ENCODE measurements at regions of chr14 and their contacts with region 1.

Region 1: DNA sequence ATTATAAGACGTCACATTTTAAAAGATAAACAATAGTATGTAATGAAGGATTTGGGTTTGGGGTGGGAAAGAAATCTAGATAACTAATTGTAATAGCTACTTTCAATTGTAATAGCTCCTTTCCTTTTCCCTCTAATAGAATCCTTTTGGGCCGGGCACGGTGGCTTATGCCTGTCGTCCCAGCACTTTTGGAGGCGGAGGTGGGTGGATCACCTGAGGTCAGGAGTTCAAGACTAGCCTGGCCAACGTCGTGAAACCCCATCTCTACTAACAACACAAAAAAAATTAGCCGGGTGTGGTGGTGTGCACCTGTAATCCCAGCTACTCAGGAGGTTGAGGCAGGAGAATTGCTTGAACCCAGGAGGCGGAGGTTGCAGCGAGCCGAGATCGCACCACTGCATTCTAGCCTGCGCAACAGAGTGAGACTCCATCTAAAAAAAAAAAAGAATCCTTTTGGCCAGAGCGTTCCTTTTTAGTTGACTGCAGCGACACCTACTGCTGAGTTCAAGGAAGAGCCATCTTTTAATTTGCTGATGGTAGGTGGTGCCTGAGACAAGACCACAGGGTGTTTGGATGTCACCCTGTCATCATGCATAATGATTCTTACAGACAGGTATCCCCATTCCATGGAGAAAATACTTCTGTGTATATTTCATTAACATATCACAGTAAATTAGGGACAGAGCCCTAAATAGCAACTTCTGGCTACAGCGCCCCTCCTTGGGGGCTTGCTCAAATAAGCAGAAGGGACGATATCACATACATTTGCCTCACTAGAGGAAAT is 79.5 kb downstream of the ARMH4 start:
- DNase-seq: peak in 1 of 2 experiments; percentile 37
- H3K4me3 ChIP-seq: no peak overlapping the region
- H3K27ac ChIP-seq: no peak overlapping the region
- H3K4me1 ChIP-seq: no peaks in the 10 kb centered on the region
- H3K27me3 ChIP-seq: peaks cover 12% of the 10 kb centered on the region; the same call in 1 of the 2 replicates
- CTCF ChIP-seq: peak; percentile 82

Region 2: GRCh38 chr14:56491299-56492285 is 1580.9 kb before region 1 on chr14:
- CTCF ChIA-PET with region 1: no interaction called
- POLR2A ChIA-PET with region 1: no interaction called
- intact Hi-C with region 1: loop called (anchors 10 kb)
- DNase-seq: peak; percentile 27 to 38
- H3K4me3 ChIP-seq: no peak overlapping the region; the same call in 1 of the 2 replicates
- H3K27ac ChIP-seq: no peak overlapping the region
- H3K4me1 ChIP-seq: no peaks in the 10 kb centered on the region
- H3K27me3 ChIP-seq: no peaks in the 10 kb centered on the region
- CTCF ChIP-seq: peak; percentile 78

Region 3: GRCh38 chr14:57486767-57487379 is 585.6 kb before region 1 on chr14:
- CTCF ChIA-PET with region 1: interaction called, 3 read pairs
- POLR2A ChIA-PET with region 1: no interaction called
- intact Hi-C with region 1: loop called (anchors 2 kb)
- DNase-seq: no peak
- H3K4me3 ChIP-seq: no peak overlapping the region
- H3K27ac ChIP-seq: no peak overlapping the region
- H3K4me1 ChIP-seq: no peaks in the 10 kb centered on the region
- H3K27me3 ChIP-seq: peaks cover 26% of the 10 kb centered on the region
- CTCF ChIP-seq: peak; percentile 70

Region 4: DNA sequence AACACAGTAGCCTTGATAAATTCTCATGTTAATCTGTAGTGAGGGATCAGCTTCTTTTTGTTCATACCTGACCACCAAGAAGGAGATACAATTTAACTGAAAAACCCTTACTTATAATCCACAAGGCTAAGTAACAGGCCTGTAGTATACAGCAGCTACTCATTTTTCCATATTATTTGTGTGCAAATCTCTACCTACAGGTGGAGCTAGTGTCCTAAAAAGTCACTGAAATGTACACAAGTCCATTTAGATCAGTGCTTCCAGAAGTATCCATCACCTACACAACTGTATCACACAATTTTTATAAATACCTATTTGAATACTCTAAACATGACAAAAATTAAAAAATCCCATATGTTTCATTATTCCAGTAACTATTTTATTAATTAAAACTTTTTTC is 379.8 kb before region 1 on chr14:
- CTCF ChIA-PET with region 1: no interaction called
- POLR2A ChIA-PET with region 1: no interaction called
- intact Hi-C with region 1: loop called (anchors 10 kb)
- DNase-seq: no peak
- H3K4me3 ChIP-seq: no peak overlapping the region
- H3K27ac ChIP-seq: no peak overlapping the region
- H3K4me1 ChIP-seq: no peaks in the 10 kb centered on the region
- H3K27me3 ChIP-seq: 0 out of 2 replicates have a peak, but pooled peaks cover 4% of the 10 kb centered on the region
- CTCF ChIP-seq: peak; percentile 70

Region 5: GRCh38 chr14:57833323-57833722 is 239.2 kb before region 1 on chr14:
- CTCF ChIA-PET with region 1: no interaction called
- POLR2A ChIA-PET with region 1: no interaction called
- intact Hi-C with region 1: no loop called
- DNase-seq: peak; percentile 28 to 65
- H3K4me3 ChIP-seq: no peak overlapping the region
- H3K27ac ChIP-seq: no peak overlapping the region
- H3K4me1 ChIP-seq: no peaks in the 10 kb centered on the region; the same call in 1 of the 2 replicates
- H3K27me3 ChIP-seq: no peaks in the 10 kb centered on the region
- CTCF ChIP-seq: no peak

Region 6: DNA sequence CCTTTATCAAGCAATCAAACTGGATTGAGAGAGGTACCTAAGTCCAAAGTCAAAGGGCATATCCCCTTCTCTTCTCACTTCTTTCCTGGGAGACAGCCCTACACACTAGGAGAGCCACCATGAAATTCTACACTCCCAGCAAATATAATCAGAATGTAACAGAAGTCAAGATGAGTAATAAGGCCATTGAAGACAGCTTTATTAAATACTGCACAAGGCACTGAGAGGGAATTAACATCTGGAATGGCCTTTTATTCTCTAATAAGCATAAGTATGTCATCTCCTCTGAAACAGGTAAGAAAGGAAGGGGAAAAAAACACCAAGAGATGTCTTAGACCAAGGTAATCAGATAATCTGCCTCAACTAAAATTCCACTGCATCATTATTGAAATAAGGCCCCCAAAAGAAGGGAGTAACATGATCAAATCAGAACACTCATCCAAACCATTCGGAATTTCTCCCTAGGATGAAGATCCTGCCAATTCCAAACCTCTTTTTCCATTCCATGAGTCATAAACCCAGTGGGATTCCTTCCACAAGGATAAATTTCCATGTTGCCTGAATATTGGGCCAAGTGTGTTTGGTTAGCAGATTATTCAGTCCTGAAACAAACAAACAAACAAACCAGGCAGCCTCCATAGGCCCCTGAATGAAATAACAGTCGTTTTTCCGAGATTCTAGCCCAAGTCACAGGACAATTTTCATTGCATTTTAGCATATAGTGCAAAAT is 226.5 kb before region 1 on chr14:
- CTCF ChIA-PET with region 1: no interaction called
- POLR2A ChIA-PET with region 1: no interaction called
- intact Hi-C with region 1: no loop called
- DNase-seq: no peak
- H3K4me3 ChIP-seq: no peak overlapping the region
- H3K27ac ChIP-seq: no peak overlapping the region
- H3K4me1 ChIP-seq: no peaks in the 10 kb centered on the region
- H3K27me3 ChIP-seq: no peaks in the 10 kb centered on the region
- CTCF ChIP-seq: no peak